ENCODE measurements at regions of chr14 and their contacts with region 1.

Region 1: DNA sequence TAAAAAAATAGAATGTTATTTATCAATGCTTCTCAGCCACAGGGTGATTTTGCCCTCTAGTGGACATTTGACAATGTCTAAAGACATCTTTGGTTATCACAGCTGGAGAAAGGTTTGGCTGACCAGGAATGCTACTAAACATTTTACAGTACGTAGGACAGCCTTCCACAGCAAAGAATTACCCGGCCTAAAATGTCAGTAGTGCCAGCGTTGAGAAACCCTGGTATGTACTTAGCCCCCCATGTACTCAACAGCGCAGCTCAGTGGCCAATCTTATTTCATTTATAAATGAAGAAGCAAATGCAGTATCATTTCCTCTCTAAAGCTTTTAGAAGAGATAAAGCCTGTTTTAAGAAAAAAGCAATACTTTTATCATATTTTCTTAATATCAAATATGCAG is 5.8 kb downstream of the MARK3 start:
- DNase-seq: peak; percentile 47
- H3K4me3 Mint-ChIP-seq: no peak overlapping the region
- H3K27ac Mint-ChIP-seq: no peak overlapping the region
- H3K4me1 Mint-ChIP-seq: peaks cover 54% of the 10 kb centered on the region
- H3K27me3 Mint-ChIP-seq: no peaks in the 10 kb centered on the region

Region 2: GRCh38 chr14:103155013-103155412 is 236.0 kb before region 1 on chr14:
- CTCF ChIA-PET with region 1: no interaction called
- POLR2A ChIA-PET with region 1: no interaction called
- intact Hi-C with region 1: no loop called
- DNase-seq: no peak
- H3K4me3 Mint-ChIP-seq: no peak overlapping the region
- H3K27ac Mint-ChIP-seq: no peak overlapping the region
- H3K4me1 Mint-ChIP-seq: no peaks in the 10 kb centered on the region
- H3K27me3 Mint-ChIP-seq: no peaks in the 10 kb centered on the region

Region 3: GRCh38 chr14:103333754-103334643 is 57.0 kb before region 1 on chr14 and contains the start of gene EIF5:
- CTCF ChIA-PET with region 1: interaction called, 12 read pairs
- POLR2A ChIA-PET with region 1: interaction called, 4 read pairs
- intact Hi-C with region 1: no loop called
- DNase-seq: peak; percentile 99
- H3K4me3 Mint-ChIP-seq: peak within 1 kb of the TSS; percentile 88
- H3K27ac Mint-ChIP-seq: peak within 1 kb of the TSS; percentile 96
- H3K4me1 Mint-ChIP-seq: peaks cover 47% of the 10 kb centered on the region
- H3K27me3 Mint-ChIP-seq: peaks cover 1% of the 10 kb centered on the region
- total RNA-seq, gene EIF5: 192 to 196 TPM

Region 4: DNA sequence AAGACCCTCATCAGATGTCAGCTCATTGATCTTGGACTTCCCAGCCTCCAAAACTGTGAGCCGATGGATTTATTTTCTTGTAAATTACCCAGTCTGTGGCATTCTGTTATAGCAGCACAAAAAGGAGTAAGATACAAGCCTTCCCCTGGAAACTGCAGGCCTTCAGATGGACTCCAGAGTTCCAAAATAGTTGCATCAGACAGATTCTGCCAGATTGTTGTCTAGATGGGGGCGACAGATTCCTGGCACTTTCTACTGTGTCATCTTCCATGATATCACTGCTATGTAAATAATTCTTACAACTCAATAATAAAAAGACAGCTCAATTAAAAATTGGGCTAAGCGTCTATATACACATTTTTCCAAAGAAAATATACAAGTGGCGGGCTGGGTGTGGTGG is 23.1 kb before region 1 on chr14:
- CTCF ChIA-PET with region 1: interaction called, 12 read pairs
- POLR2A ChIA-PET with region 1: no interaction called
- intact Hi-C with region 1: no loop called
- DNase-seq: no peak
- H3K4me3 Mint-ChIP-seq: no peak overlapping the region
- H3K27ac Mint-ChIP-seq: no peak overlapping the region
- H3K4me1 Mint-ChIP-seq: peaks cover 5% of the 10 kb centered on the region
- H3K27me3 Mint-ChIP-seq: peaks cover 5% of the 10 kb centered on the region

Region 5: GRCh38 chr14:103418481-103418818 is 27.4 kb after region 1 on chr14:
- CTCF ChIA-PET with region 1: interaction called, 26 read pairs
- POLR2A ChIA-PET with region 1: no interaction called
- intact Hi-C with region 1: no loop called
- DNase-seq: peak; percentile 31
- H3K4me3 Mint-ChIP-seq: no peak overlapping the region
- H3K27ac Mint-ChIP-seq: peak overlapping the region; percentile 25
- H3K4me1 Mint-ChIP-seq: peaks cover 53% of the 10 kb centered on the region
- H3K27me3 Mint-ChIP-seq: no peaks in the 10 kb centered on the region

Region 6: GRCh38 chr14:103450416-103450815 is 59.4 kb after region 1 on chr14:
- CTCF ChIA-PET with region 1: interaction called, 11 read pairs
- POLR2A ChIA-PET with region 1: no interaction called
- intact Hi-C with region 1: no loop called
- DNase-seq: no peak
- H3K4me3 Mint-ChIP-seq: no peak overlapping the region
- H3K27ac Mint-ChIP-seq: no peak overlapping the region
- H3K4me1 Mint-ChIP-seq: peaks cover 24% of the 10 kb centered on the region
- H3K27me3 Mint-ChIP-seq: no peaks in the 10 kb centered on the region

Region 7: GRCh38 chr14:103480595-103480994 is 89.5 kb after region 1 on chr14:
- CTCF ChIA-PET with region 1: no interaction called
- POLR2A ChIA-PET with region 1: no interaction called
- intact Hi-C with region 1: no loop called
- DNase-seq: no peak
- H3K4me3 Mint-ChIP-seq: no peak overlapping the region
- H3K27ac Mint-ChIP-seq: peak overlapping the region; percentile 11
- H3K4me1 Mint-ChIP-seq: peaks cover 14% of the 10 kb centered on the region
- H3K27me3 Mint-ChIP-seq: no peaks in the 10 kb centered on the region

Measured in activated CD4-positive, alpha-beta memory T cell treated with anti-CD3 and anti-CD28 coated beads for 36 hours (primary cell).